Right ventricle myocardium inferior (tissue), 1 donor: ENCODE measurements at regions of chr3 and their contacts with region 1.

Region 1: DNA sequence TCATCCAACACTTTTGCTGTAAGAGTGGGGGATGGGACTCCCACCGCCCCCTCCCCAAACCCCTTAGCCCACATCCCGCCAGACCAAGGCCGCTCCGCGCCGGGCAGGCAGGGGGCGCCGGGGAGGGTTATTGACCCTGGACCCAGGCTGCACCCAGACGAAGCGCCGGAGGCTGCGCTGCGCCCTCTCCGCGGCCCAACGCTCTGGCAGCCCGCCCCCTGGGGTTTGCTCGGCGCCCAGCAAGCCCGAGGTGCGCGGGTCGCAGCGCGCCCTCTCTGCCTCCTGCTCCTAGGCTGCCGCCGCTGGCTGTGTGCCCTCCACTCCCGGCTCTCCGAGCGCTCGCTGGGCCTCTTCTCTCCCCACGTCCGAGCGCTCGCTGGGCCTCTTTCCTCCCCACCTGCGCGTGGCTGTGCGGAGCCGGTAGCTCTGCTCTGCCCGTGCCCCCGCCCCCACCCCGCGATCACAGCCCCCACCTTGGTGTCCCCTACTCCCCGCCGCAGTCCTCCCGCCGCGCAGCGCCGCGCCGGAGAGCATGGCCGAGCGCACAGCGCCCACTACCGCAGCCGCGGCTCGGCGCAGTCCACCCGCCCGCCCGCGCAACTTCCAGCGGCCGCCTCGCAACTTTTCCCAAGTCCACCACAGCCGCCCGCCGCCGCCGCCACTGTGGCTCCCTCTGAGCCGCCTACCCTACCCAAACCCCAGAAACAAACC is 1.2 kb downstream of the MECOM start:
- DNase-seq: peak; percentile 82
- ATAC-seq: peak; percentile 82

Region 2: DNA sequence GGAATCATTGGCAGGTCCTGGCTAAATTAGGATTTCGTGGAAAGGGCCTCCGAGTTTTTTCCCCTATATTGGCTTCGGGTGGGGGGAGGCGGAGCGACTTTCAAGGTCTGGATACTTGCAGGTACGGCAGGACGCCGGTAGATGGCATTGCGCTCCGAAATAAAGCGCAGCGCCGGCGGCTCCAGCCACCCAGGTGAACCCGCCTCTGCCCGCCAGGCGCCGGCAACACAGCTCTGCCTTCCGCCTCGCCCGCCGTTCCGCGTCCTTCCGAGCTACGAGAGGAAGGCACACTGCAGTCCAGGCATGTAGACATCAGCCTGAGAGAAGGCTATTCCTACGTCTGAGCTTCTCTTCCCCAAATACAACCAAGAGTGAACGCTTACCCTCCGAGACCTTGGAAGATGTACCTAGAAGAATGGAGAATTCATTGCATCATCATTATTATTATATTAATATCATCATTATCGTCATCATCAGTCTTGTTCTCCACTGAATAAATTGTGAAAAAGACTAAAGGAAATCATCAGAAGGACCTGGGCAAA is 512.9 kb before region 1 on chr3:
- intact Hi-C with region 1: loop called (anchors 2 kb)
- DNase-seq: peak; percentile 89
- ATAC-seq: peak; percentile 78

Region 3: DNA sequence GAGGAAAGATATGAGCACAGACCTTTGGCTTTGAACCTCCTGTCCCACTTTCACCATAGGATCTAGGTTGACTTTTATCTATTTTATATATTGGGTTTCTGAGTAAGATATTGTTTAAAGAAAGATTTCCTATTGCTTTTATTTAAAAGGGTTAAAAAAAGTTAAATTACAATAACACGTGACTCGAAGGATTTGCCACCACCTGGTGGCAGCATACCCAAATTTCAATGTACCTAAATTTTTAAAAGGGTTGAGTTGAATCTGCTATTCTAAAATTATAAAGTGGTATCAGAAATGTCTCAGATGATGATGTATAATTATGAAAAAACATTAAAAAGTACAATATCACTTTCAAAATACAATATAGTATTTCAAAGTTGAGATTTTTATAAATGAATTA is 367.2 kb before region 1 on chr3:
- intact Hi-C with region 1: loop called (anchors 1 kb)
- DNase-seq: no peak
- ATAC-seq: no peak

Region 4: DNA sequence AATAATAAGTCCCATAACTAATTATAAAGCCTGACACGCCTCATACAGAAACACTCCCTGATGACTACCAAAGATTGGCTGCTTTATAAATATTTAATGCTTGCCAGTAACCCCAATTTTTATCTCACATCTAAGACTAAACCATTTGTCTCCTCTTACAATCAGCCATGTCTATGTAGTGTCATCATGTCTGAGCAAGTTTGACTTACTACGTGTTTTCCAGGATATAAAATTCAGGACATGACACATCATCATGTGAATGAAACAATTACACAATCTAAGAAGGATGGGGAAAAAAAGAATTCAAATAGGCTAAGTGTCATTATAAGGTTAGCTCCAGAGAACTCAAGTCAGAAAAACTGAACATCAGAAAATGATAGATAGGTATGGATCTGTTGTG is 207.5 kb before region 1 on chr3:
- intact Hi-C with region 1: loop called (anchors 5 kb)
- DNase-seq: no peak
- ATAC-seq: peak; percentile 75

Region 5: GRCh38 chr3:169619793-169620192 is 42.5 kb before region 1 on chr3:
- intact Hi-C with region 1: loop called (anchors 5 kb)
- DNase-seq: no peak
- ATAC-seq: no peak